PC-9 (cell line): ENCODE measurements at regions of chr12 and their contacts with region 1.

Region 1: GRCh38 chr12:8544295-8544694 is 3.6 kb upstream of the CLEC4E start:
- DNase-seq: peak; percentile 48 to 75
- H3K4me3 ChIP-seq: no peak overlapping the region
- H3K27ac ChIP-seq: no peak overlapping the region
- H3K4me1 ChIP-seq: no peaks in the 10 kb centered on the region
- H3K27me3 ChIP-seq: peaks cover 11% of the 10 kb centered on the region; the same call in 1 of the 2 replicates
- CTCF ChIP-seq: peak; percentile 99

Region 2: GRCh38 chr12:7583571-7583970 is 960.7 kb before region 1 on chr12:
- CTCF ChIA-PET with region 1: interaction called, 15 read pairs
- POLR2A ChIA-PET with region 1: no interaction called
- intact Hi-C with region 1: no loop called
- DNase-seq: no peak
- H3K4me3 ChIP-seq: no peak overlapping the region
- H3K27ac ChIP-seq: peak overlapping the region; percentile 82
- H3K4me1 ChIP-seq: peaks cover 20% of the 10 kb centered on the region
- H3K27me3 ChIP-seq: no peaks in the 10 kb centered on the region
- CTCF ChIP-seq: no peak

Region 3: GRCh38 chr12:8493084-8493483 is 51.2 kb before region 1 on chr12:
- CTCF ChIA-PET with region 1: no interaction called
- POLR2A ChIA-PET with region 1: no interaction called
- intact Hi-C with region 1: no loop called
- DNase-seq: peak in 1 of 2 experiments; percentile 15
- H3K4me3 ChIP-seq: no peak overlapping the region
- H3K27ac ChIP-seq: no peak overlapping the region
- H3K4me1 ChIP-seq: no peaks in the 10 kb centered on the region
- H3K27me3 ChIP-seq: peaks cover 14% of the 10 kb centered on the region
- CTCF ChIP-seq: no peak

Region 4: DNA sequence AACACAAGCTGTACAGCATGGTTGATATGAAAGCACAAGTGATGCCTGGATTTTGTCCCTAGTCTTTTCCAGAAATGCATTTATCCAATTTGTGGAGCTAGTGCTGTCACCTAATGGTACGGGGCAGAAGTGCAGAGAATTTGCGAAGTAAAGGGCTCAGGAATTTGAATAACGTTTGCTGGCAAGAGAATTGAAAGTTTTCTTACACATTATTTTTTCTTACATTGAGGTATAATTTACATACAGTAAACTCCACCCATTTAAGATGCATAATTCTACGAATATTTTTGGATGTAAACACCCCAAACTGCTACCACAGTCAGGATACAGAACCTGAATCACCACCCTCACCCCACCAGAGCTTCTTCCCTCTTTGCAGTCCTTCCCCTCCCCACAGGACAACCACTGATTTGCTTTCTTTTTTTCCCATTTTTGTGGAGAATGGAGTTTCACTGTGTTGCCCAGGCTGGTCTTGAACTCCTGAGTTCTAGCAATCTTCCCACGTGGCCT is 64.8 kb after region 1 on chr12:
- CTCF ChIA-PET with region 1: interaction called, 14 read pairs
- POLR2A ChIA-PET with region 1: interaction called, 5 read pairs
- intact Hi-C with region 1: loop called (anchors 1 kb)
- DNase-seq: peak in 1 of 2 experiments; percentile 33
- H3K4me3 ChIP-seq: peak overlapping the region; percentile 28; the same call in 1 of the 2 replicates
- H3K27ac ChIP-seq: no peak overlapping the region
- H3K4me1 ChIP-seq: no peaks in the 10 kb centered on the region
- H3K27me3 ChIP-seq: peaks cover 8% of the 10 kb centered on the region; the same call in 1 of the 2 replicates
- CTCF ChIP-seq: peak; percentile 80

Region 5: GRCh38 chr12:9039397-9039977 is 495.2 kb after region 1 on chr12:
- CTCF ChIA-PET with region 1: interaction called, 3 read pairs
- POLR2A ChIA-PET with region 1: no interaction called
- intact Hi-C with region 1: loop called (anchors 1 kb)
- DNase-seq: peak in 1 of 2 experiments; percentile 52
- H3K4me3 ChIP-seq: no peak overlapping the region
- H3K27ac ChIP-seq: no peak overlapping the region
- H3K4me1 ChIP-seq: no peaks in the 10 kb centered on the region
- H3K27me3 ChIP-seq: no peaks in the 10 kb centered on the region
- CTCF ChIP-seq: peak; percentile 85

Region 6: DNA sequence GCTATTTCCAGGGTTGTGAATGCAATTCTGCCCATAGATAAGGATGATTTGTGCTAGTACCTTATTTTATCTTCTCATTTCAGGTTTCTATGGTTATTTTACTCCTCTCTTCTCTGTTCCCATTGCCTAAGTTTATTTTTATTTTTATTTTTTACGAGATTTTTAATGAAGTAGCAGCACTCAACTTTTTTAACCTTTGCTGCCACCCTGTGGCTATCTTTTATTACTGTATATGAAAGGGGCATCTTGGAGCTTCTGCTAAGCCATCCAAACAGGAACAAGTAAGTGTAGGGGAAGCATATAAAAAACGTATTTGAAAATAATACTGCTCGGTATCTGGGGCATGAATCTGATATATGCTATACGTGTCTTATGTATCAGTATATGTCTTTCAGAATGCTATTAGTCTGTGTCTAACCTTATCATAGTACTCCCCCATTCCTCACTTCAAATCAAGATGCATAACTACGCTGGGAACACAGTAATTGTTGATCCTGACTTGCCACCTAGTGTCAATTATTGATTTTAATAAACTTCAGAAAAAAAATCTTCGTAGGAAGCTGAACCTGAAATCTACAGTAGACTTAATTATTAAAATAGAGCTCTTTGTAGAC is 505.3 kb after region 1 on chr12:
- CTCF ChIA-PET with region 1: interaction called, 30 read pairs
- POLR2A ChIA-PET with region 1: no interaction called
- intact Hi-C with region 1: loop called (anchors 1 kb)
- DNase-seq: peak; percentile 34 to 52
- H3K4me3 ChIP-seq: no peak overlapping the region
- H3K27ac ChIP-seq: no peak overlapping the region
- H3K4me1 ChIP-seq: no peaks in the 10 kb centered on the region
- H3K27me3 ChIP-seq: peaks cover 13% of the 10 kb centered on the region
- CTCF ChIP-seq: peak; percentile 80